Kidney (tissue), 22 donors: ENCODE measurements at regions of chr21 and their contacts with region 1.

Region 1: GRCh38 chr21:26715878-26716506 is 129.2 kb downstream of the ADAMTS1 start:
- DNase-seq: peak in 4 of 5 donors; percentile 64 to 76 (median 66)
- H3K4me3 ChIP-seq: no peak overlapping the region
- H3K27ac ChIP-seq: no peak overlapping the region
- H3K4me1 ChIP-seq: no peaks in the 10 kb centered on the region
- H3K27me3 ChIP-seq: no peaks in the 10 kb centered on the region
- CTCF ChIP-seq: peak; percentile 62

Region 2: GRCh38 chr21:25881525-25882376 is 834.2 kb before region 1 on chr21:
- intact Hi-C with region 1: loop called (anchors 10 kb)
- DNase-seq: peak; percentile 67 to 85 (median 75)
- H3K4me3 ChIP-seq: no peak overlapping the region
- H3K27ac ChIP-seq: no peak overlapping the region
- H3K4me1 ChIP-seq: peaks cover 0 to 17% (median 12%) of the 10 kb centered on the region in 3 donors
- H3K27me3 ChIP-seq: no peaks in the 10 kb centered on the region
- CTCF ChIP-seq: peak; percentile 96

Region 3: DNA sequence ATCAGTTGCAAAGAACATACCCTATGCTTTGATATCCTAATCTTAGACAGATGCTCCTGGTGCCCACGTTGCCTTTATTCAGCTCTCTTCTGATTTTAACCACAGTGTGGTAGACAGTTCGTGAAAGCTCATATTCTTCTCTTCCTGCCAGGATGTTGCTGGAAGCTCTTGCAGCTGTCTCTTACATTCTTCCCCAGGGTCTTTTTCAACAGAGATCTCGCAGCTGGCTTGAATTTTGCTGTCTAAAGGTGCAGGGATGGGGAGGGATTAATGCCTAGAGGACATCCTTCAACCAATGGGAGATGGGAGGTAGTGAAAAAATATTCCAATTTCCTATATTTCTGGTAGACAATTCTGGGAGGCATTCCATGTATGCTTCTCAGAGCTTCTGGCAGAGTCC is 395.4 kb before region 1 on chr21:
- intact Hi-C with region 1: no loop called
- DNase-seq: no peak
- H3K4me3 ChIP-seq: no peak overlapping the region
- H3K27ac ChIP-seq: no peak overlapping the region
- H3K4me1 ChIP-seq: no peaks in the 10 kb centered on the region
- H3K27me3 ChIP-seq: no peaks in the 10 kb centered on the region
- CTCF ChIP-seq: no peak